ENCODE measurements at regions of chr12 and their contacts with region 1.

Region 1: GRCh38 chr12:96445691-96446583 is 43.4 kb upstream of the CFAP54 start:
- DNase-seq: peak; percentile 90
- H3K4me3 Mint-ChIP-seq: peak overlapping the region; percentile 70
- H3K27ac Mint-ChIP-seq: peak overlapping the region; percentile 87
- H3K4me1 Mint-ChIP-seq: peaks cover 40% of the 10 kb centered on the region
- H3K27me3 Mint-ChIP-seq: no peaks in the 10 kb centered on the region

Region 2: GRCh38 chr12:95838125-95838524 is 607.8 kb before region 1 on chr12:
- intact Hi-C with region 1: no loop called
- DNase-seq: no peak
- H3K4me3 Mint-ChIP-seq: no peak overlapping the region
- H3K27ac Mint-ChIP-seq: no peak overlapping the region
- H3K4me1 Mint-ChIP-seq: peaks cover 2% of the 10 kb centered on the region
- H3K27me3 Mint-ChIP-seq: peaks cover 29% of the 10 kb centered on the region

Region 3: DNA sequence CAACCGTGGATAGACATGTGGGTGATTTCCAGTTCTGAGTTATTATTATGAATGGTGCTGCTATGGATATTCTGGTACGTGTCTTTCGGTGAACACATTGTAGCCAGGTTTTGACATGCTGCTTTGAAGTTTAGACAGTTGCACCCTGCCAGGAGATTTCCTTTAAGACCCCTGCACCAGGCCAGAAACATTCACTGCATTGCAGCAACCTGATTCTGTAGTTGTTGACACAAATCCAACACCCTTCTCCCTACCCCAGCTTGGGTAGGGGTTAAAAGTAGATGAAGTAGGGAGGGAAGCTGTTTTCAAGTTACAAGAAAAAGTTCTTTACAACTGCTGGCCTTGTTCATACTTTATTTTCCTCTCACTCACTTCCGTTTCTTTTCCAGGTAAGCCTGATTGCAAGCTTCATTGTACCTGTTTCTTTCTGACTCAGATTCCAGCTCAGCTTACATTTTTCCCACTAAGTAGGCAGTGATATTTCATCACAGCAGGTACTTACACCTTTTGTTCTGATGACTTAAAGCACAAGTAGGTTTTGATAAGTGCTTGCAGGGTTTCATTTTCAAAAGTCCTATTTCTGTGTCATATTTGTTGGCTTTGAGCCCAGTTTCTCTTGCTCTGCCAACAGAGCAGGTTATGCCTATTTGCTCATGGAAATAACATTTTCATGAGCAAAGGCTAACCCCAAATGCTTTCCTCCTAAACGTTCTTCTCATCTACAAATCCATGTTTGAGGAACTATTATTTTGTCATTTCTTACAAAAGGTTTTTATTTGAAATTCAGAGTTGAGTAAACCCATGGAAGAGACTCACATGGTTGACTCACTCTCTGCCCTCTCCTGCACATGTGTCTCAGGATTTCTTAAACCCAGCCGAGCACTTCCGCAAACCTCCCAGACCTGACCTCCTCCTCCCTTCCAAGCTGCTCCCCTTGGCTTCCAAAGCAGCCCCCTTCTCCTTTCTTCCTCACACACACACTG is 398.4 kb before region 1 on chr12:
- intact Hi-C with region 1: loop called (anchors 1 kb)
- DNase-seq: peak; percentile 73
- H3K4me3 Mint-ChIP-seq: peak overlapping the region; percentile 53
- H3K27ac Mint-ChIP-seq: peak overlapping the region; percentile 81
- H3K4me1 Mint-ChIP-seq: peaks cover 38% of the 10 kb centered on the region
- H3K27me3 Mint-ChIP-seq: no peaks in the 10 kb centered on the region

Region 4: GRCh38 chr12:96427269-96427729 is 18.6 kb before region 1 on chr12:
- intact Hi-C with region 1: loop called (anchors 1 kb)
- DNase-seq: peak; percentile 68
- H3K4me3 Mint-ChIP-seq: peak overlapping the region; percentile 63
- H3K27ac Mint-ChIP-seq: peak overlapping the region; percentile 80
- H3K4me1 Mint-ChIP-seq: peaks cover 37% of the 10 kb centered on the region
- H3K27me3 Mint-ChIP-seq: no peaks in the 10 kb centered on the region

Region 5: DNA sequence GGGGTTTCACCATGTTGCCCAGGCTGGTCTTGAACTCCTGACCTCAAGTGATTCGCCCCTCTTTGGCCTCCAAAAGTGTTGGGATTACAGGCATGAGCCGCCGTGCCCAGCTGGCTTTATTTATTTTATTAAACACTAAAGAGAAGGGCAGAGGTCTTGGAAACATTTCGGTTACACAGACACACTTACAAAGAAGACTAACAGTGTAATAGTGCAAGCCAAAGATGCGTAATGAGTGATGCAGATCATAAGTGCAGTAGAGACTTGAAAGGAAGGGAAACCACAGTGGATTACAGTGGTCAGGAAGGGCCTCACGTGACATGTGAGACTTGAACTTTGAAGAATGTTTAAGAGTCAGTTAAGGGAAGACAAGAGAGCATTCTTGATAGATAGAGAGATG is 11.8 kb before region 1 on chr12:
- intact Hi-C with region 1: loop called (anchors 1 kb)
- DNase-seq: peak; percentile 93
- H3K4me3 Mint-ChIP-seq: peak overlapping the region; percentile 48
- H3K27ac Mint-ChIP-seq: peak overlapping the region; percentile 62
- H3K4me1 Mint-ChIP-seq: peaks cover 31% of the 10 kb centered on the region
- H3K27me3 Mint-ChIP-seq: no peaks in the 10 kb centered on the region

Region 6: GRCh38 chr12:96571101-96571862 is 125.3 kb after region 1 on chr12:
- intact Hi-C with region 1: loop called (anchors 1 kb)
- DNase-seq: peak; percentile 59
- H3K4me3 Mint-ChIP-seq: peak overlapping the region; percentile 44
- H3K27ac Mint-ChIP-seq: peak overlapping the region; percentile 81
- H3K4me1 Mint-ChIP-seq: peaks cover 16% of the 10 kb centered on the region
- H3K27me3 Mint-ChIP-seq: peaks cover 10% of the 10 kb centered on the region